T-cell (primary cell): ENCODE measurements at regions of chr2 and their contacts with region 1.

Region 1: GRCh38 chr2:27281855-27282559 is at the start of gene TRIM54:
- DNase-seq: no peak
- ATAC-seq: no peak
- H3K4me3 ChIP-seq: no peak within 1 kb of the TSS
- H3K4me3 Mint-ChIP-seq: no peak within 1 kb of the TSS
- H3K27ac ChIP-seq: no peak within 1 kb of the TSS
- H3K27ac Mint-ChIP-seq: no peak within 1 kb of the TSS
- H3K4me1 ChIP-seq: peaks cover 0 to 2% of the 10 kb centered on the region in 2 experiments
- H3K4me1 Mint-ChIP-seq: peaks cover 2 to 6% (median 2%) of the 10 kb centered on the region in 3 donors
- H3K27me3 ChIP-seq: peaks cover 2 to 30% of the 10 kb centered on the region in 2 experiments
- H3K27me3 Mint-ChIP-seq: peaks cover 25 to 37% of the 10 kb centered on the region in 2 donors
- total RNA-seq, gene TRIM54: not detected

Region 2: GRCh38 chr2:26959331-26959730 is 322.7 kb before region 1 on chr2:
- CTCF ChIA-PET with region 1: interaction called, 13 to 40 read pairs
- POLR2A ChIA-PET with region 1: no interaction called
- DNase-seq: no peak
- ATAC-seq: no peak
- H3K4me3 ChIP-seq: no peak overlapping the region
- H3K4me3 Mint-ChIP-seq: no peak overlapping the region
- H3K27ac ChIP-seq: no peak overlapping the region
- H3K27ac Mint-ChIP-seq: no peak overlapping the region
- H3K4me1 ChIP-seq: peaks cover 0 to 5% of the 10 kb centered on the region in 2 experiments
- H3K4me1 Mint-ChIP-seq: no peaks in the 10 kb centered on the region
- H3K27me3 ChIP-seq: peaks cover 0 to 31% of the 10 kb centered on the region in 2 experiments
- H3K27me3 Mint-ChIP-seq: peaks cover 14 to 38% of the 10 kb centered on the region in 2 donors

Region 3: DNA sequence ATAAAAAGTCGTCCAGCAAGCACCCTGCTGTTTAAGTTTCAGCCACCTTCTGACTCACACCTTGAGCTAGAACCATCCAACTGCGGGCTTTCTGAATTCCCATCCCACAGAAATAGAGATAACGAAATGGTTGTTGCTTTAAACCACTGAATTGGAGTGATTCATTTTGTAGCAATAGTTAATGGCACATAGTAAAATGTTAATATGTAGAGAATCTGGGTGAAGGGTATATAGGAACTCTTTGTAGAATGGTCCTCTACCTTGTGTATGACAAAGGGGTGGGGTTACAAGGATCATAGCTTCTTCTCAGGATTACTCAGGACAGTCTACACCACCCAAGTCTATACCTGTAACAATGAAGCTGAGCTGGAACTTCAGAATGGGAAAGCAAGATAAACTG is 314.0 kb before region 1 on chr2:
- CTCF ChIA-PET with region 1: interaction called in 1 of 2 experiments, 40 read pairs
- POLR2A ChIA-PET with region 1: interaction called in 1 of 2 experiments, 11 read pairs
- DNase-seq: no peak
- ATAC-seq: no peak
- H3K4me3 ChIP-seq: no peak overlapping the region
- H3K4me3 Mint-ChIP-seq: no peak overlapping the region
- H3K27ac ChIP-seq: no peak overlapping the region
- H3K27ac Mint-ChIP-seq: no peak overlapping the region
- H3K4me1 ChIP-seq: peaks cover 0 to 16% of the 10 kb centered on the region in 2 experiments
- H3K4me1 Mint-ChIP-seq: peaks cover 20 to 30% (median 23%) of the 10 kb centered on the region in 3 donors
- H3K27me3 ChIP-seq: peaks cover 0 to 24% of the 10 kb centered on the region in 2 experiments
- H3K27me3 Mint-ChIP-seq: peaks cover 23 to 26% of the 10 kb centered on the region in 2 donors

Region 4: GRCh38 chr2:27092696-27093429 is 189.1 kb before region 1 on chr2:
- CTCF ChIA-PET with region 1: interaction called, 8 read pairs
- POLR2A ChIA-PET with region 1: interaction called, 4 to 11 read pairs
- DNase-seq: no peak
- ATAC-seq: no peak
- H3K4me3 ChIP-seq: no peak overlapping the region
- H3K4me3 Mint-ChIP-seq: no peak overlapping the region
- H3K27ac ChIP-seq: no peak overlapping the region
- H3K27ac Mint-ChIP-seq: no peak overlapping the region
- H3K4me1 ChIP-seq: peaks cover 2 to 9% of the 10 kb centered on the region in 2 experiments
- H3K4me1 Mint-ChIP-seq: peaks cover 12 to 29% (median 15%) of the 10 kb centered on the region in 3 donors
- H3K27me3 ChIP-seq: peaks cover 0 to 10% of the 10 kb centered on the region in 2 experiments
- H3K27me3 Mint-ChIP-seq: no peaks in the 10 kb centered on the region

Region 5: GRCh38 chr2:27102329-27102728 is 179.7 kb before region 1 on chr2:
- CTCF ChIA-PET with region 1: interaction called, 8 to 10 read pairs
- POLR2A ChIA-PET with region 1: no interaction called
- DNase-seq: no peak
- ATAC-seq: no peak
- H3K4me3 ChIP-seq: no peak overlapping the region
- H3K4me3 Mint-ChIP-seq: no peak overlapping the region
- H3K27ac ChIP-seq: no peak overlapping the region
- H3K27ac Mint-ChIP-seq: no peak overlapping the region
- H3K4me1 ChIP-seq: no peaks in the 10 kb centered on the region
- H3K4me1 Mint-ChIP-seq: no peaks in the 10 kb centered on the region
- H3K27me3 ChIP-seq: peaks cover 0 to 17% of the 10 kb centered on the region in 2 experiments
- H3K27me3 Mint-ChIP-seq: peaks cover 4 to 9% of the 10 kb centered on the region in 2 donors

Region 6: DNA sequence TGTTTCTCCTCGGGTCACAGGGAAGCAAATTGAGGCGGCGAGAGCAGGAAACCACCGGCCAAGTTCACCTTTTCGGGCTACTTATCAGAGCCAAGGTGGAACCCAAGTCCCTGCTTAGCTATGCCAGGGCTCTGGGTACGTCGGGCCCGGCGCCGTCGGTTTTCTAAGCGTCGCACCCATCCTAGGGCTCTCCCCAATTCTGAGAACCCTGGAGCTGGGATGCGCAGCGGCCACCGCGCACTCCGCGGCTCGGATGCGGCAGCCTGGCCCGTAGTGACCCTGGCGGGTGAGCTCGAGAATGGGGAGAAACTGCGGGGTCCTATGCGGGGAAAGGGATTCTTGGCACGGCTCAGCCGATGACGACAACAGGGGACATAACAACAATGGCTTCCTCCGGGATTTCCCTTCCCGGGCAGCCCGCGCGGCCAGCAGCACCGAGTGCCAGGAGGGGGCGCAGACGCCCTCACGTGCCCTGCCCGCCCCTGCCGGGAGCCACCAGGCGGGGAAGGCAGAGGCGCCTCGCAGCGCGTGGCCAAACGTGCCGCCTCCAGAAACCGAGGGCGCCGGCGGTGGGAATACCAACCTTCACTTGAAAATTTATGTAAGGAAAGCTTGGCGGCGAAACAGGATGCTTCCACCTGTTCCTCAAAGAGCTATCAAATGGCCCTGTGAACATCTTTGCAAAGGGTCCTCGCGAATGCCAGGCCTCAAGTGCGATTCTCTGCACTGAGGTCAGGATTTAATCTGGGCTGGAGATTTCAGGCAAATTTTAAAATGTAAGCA is 17.1 kb before region 1 on chr2:
- CTCF ChIA-PET with region 1: interaction called, 6 to 18 read pairs
- POLR2A ChIA-PET with region 1: no interaction called
- DNase-seq: peak; percentile 14 to 85 (median 48)
- ATAC-seq: peak; percentile 62 to 85 (median 66)
- H3K4me3 ChIP-seq: peak overlapping the region; percentile 41 to 86
- H3K4me3 Mint-ChIP-seq: peak overlapping the region in 2 of 3 donors; percentile 84 to 85
- H3K27ac ChIP-seq: no peak overlapping the region
- H3K27ac Mint-ChIP-seq: no peak overlapping the region
- H3K4me1 ChIP-seq: peaks cover 5 to 42% of the 10 kb centered on the region in 2 experiments
- H3K4me1 Mint-ChIP-seq: peaks cover 28 to 35% (median 30%) of the 10 kb centered on the region in 3 donors
- H3K27me3 ChIP-seq: peaks cover 20 to 66% of the 10 kb centered on the region in 2 experiments
- H3K27me3 Mint-ChIP-seq: peaks cover 38 to 43% of the 10 kb centered on the region in 2 donors

Region 7: GRCh38 chr2:27303093-27304025 is 21.4 kb after region 1 on chr2:
- CTCF ChIA-PET with region 1: interaction called, 3 to 11 read pairs
- POLR2A ChIA-PET with region 1: no interaction called
- DNase-seq: peak in 25 of 35 experiments; percentile 13 to 73 (median 28)
- ATAC-seq: peak; percentile 56 to 76 (median 60)
- H3K4me3 ChIP-seq: peak overlapping the region; percentile 33 to 46
- H3K4me3 Mint-ChIP-seq: peak overlapping the region; percentile 64 to 72 (median 68)
- H3K27ac ChIP-seq: no peak overlapping the region
- H3K27ac Mint-ChIP-seq: peak overlapping the region in 1 of 2 donors; percentile 71
- H3K4me1 ChIP-seq: peaks cover 0 to 22% of the 10 kb centered on the region in 2 experiments
- H3K4me1 Mint-ChIP-seq: peaks cover 6 to 13% (median 6%) of the 10 kb centered on the region in 3 donors
- H3K27me3 ChIP-seq: peaks cover 2 to 42% of the 10 kb centered on the region in 2 experiments
- H3K27me3 Mint-ChIP-seq: peaks cover 18 to 35% of the 10 kb centered on the region in 2 donors

Region 8: DNA sequence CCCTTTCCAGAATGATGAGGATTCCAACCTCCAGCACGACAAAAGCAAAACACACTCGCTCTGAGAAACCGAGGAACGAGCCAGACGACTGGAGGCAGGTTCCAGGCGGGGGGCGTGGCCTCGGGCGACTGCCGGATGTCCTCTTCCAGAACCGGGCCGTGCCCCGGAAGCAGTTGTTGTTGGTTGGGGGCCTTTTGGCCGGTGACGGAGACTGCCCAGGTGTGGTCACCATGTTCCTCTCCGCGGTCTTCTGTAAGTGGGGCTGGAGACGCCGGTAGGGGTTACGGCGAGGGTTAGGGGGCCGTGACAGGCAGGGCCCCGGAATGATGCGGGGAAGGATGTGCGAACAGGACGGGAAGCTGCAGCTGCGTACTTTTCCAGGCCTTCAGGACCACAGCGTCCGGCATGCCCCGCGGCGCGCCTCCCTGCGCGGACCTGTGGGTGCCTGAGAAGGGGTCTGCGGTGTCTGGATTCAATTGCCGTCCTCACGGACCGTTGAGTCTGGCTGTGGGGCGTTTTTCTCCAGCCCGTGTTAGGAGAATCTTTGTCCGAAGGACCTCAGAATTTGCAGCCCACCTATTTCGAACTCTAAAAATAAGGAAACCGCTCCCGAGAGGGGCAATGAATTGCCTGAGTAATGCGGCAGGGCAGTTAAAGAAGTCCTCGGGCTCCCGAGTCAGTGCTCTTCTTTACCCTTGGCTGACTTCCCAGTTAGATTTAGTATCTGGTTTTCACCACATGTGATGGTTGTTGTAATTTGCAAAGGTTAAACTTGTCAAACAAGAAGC is 489.7 kb after region 1 on chr2 and contains the start of gene MRPL33:
- CTCF ChIA-PET with region 1: no interaction called
- POLR2A ChIA-PET with region 1: no interaction called
- DNase-seq: peak; percentile 77 to 94 (median 89)
- ATAC-seq: peak; percentile 94 to 95 (median 94)
- H3K4me3 ChIP-seq: peak within 1 kb of the TSS; percentile 85 to 99
- H3K4me3 Mint-ChIP-seq: peak within 1 kb of the TSS; percentile 99 to 100 (median 99)
- H3K27ac ChIP-seq: peak within 1 kb of the TSS; percentile 80
- H3K27ac Mint-ChIP-seq: peak within 1 kb of the TSS; percentile 99 to 100
- H3K4me1 ChIP-seq: peaks cover 12 to 17% of the 10 kb centered on the region in 2 experiments
- H3K4me1 Mint-ChIP-seq: peaks cover 44 to 50% (median 49%) of the 10 kb centered on the region in 3 donors
- H3K27me3 ChIP-seq: peaks cover 0 to 3% of the 10 kb centered on the region in 2 experiments
- H3K27me3 Mint-ChIP-seq: peaks cover 0 to 2% of the 10 kb centered on the region in 2 donors
- total RNA-seq, gene MRPL33: 25.9 to 39.4 (median 29.7) TPM